WTC11 (cell line): ENCODE measurements at regions of chr4 and their contacts with region 1.

Region 1: GRCh38 chr4:47836641-47837093 is 1.2 kb downstream of the CORIN start:
- DNase-seq: peak; percentile 88
- ATAC-seq: peak; percentile 87
- H3K4me3 Mint-ChIP-seq: peak overlapping the region; percentile 84
- H3K27ac Mint-ChIP-seq: 0 out of 2 replicates have a peak overlapping the region, but pooled peaks have one; percentile 27
- H3K4me1 Mint-ChIP-seq: peaks cover 28% of the 10 kb centered on the region
- H3K27me3 Mint-ChIP-seq: peaks cover 10% of the 10 kb centered on the region; the same call in 1 of the 2 replicates
- CTCF ChIP-seq: peak; percentile 50

Region 2: GRCh38 chr4:47674144-47674543 is 162.5 kb before region 1 on chr4:
- CTCF ChIA-PET with region 1: interaction called, 25 read pairs
- POLR2A ChIA-PET with region 1: no interaction called
- DNase-seq: no peak
- ATAC-seq: no peak
- H3K4me3 Mint-ChIP-seq: no peak overlapping the region
- H3K27ac Mint-ChIP-seq: no peak overlapping the region
- H3K4me1 Mint-ChIP-seq: no peaks in the 10 kb centered on the region
- H3K27me3 Mint-ChIP-seq: no peaks in the 10 kb centered on the region
- CTCF ChIP-seq: no peak

Region 3: GRCh38 chr4:47704693-47705325 is 131.9 kb before region 1 on chr4:
- CTCF ChIA-PET with region 1: interaction called, 470 read pairs
- POLR2A ChIA-PET with region 1: interaction called, 7 read pairs
- DNase-seq: peak; percentile 60
- ATAC-seq: peak; percentile 97
- H3K4me3 Mint-ChIP-seq: no peak overlapping the region
- H3K27ac Mint-ChIP-seq: no peak overlapping the region
- H3K4me1 Mint-ChIP-seq: peaks cover 19% of the 10 kb centered on the region
- H3K27me3 Mint-ChIP-seq: no peaks in the 10 kb centered on the region
- CTCF ChIP-seq: no peak

Region 4: GRCh38 chr4:47721892-47722575 is 114.6 kb before region 1 on chr4:
- CTCF ChIA-PET with region 1: interaction called, 34 read pairs
- POLR2A ChIA-PET with region 1: interaction called, 3 read pairs
- DNase-seq: no peak
- ATAC-seq: no peak
- H3K4me3 Mint-ChIP-seq: no peak overlapping the region
- H3K27ac Mint-ChIP-seq: no peak overlapping the region
- H3K4me1 Mint-ChIP-seq: peaks cover 22% of the 10 kb centered on the region
- H3K27me3 Mint-ChIP-seq: peaks cover 2% of the 10 kb centered on the region; the same call in 1 of the 2 replicates
- CTCF ChIP-seq: no peak

Region 5: GRCh38 chr4:47774079-47774478 is 62.6 kb before region 1 on chr4:
- CTCF ChIA-PET with region 1: interaction called, 12 read pairs
- POLR2A ChIA-PET with region 1: no interaction called
- DNase-seq: peak; percentile 45
- ATAC-seq: peak; percentile 86
- H3K4me3 Mint-ChIP-seq: no peak overlapping the region
- H3K27ac Mint-ChIP-seq: no peak overlapping the region
- H3K4me1 Mint-ChIP-seq: peaks cover 5% of the 10 kb centered on the region
- H3K27me3 Mint-ChIP-seq: no peaks in the 10 kb centered on the region; the same call in 1 of the 2 replicates
- CTCF ChIP-seq: no peak

Region 6: DNA sequence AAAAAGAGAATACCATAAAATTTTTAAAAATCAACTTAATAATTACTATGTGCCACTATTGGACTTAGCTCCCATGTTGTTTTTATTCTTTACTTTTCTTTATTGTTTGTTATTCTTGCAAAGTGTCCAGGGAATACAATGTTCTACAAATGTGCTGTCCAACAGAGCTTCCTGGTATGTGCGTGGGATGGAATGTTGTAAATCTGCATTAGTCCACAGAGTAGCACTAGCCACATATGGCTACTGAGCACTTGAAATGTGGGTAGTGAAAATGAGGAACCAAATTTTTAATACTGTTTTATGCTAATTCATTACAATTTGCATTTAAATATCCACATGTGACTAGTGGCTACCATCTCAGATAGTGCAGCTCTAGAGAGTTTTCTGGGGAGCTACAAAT is 15.5 kb after region 1 on chr4:
- CTCF ChIA-PET with region 1: interaction called, 12 read pairs
- POLR2A ChIA-PET with region 1: no interaction called
- DNase-seq: no peak
- ATAC-seq: no peak
- H3K4me3 Mint-ChIP-seq: no peak overlapping the region
- H3K27ac Mint-ChIP-seq: no peak overlapping the region
- H3K4me1 Mint-ChIP-seq: no peaks in the 10 kb centered on the region
- H3K27me3 Mint-ChIP-seq: no peaks in the 10 kb centered on the region
- CTCF ChIP-seq: no peak

Region 7: DNA sequence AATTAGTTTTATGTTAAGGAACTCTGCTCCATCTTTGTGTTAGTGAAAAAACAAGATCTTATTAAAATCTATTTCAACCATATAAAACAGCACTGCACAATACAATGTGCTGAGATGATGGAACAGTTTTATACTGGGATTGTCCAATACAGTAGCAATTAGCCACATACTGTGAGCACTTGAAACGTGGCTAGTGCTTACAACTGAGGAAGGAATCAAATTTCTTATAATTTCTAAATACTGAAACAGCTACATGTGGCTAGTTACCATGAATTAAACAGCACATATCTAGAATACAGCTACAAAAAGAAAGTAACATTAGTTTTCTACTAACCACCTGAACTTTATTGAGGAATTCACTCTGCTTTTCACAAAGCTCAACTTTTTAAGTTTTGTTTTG is 63.0 kb after region 1 on chr4:
- CTCF ChIA-PET with region 1: no interaction called
- POLR2A ChIA-PET with region 1: no interaction called
- DNase-seq: no peak
- ATAC-seq: no peak
- H3K4me3 Mint-ChIP-seq: no peak overlapping the region
- H3K27ac Mint-ChIP-seq: no peak overlapping the region
- H3K4me1 Mint-ChIP-seq: no peaks in the 10 kb centered on the region
- H3K27me3 Mint-ChIP-seq: no peaks in the 10 kb centered on the region
- CTCF ChIP-seq: no peak

Region 8: GRCh38 chr4:47933840-47934239 is 97.2 kb after region 1 on chr4:
- CTCF ChIA-PET with region 1: interaction called, 28 read pairs
- POLR2A ChIA-PET with region 1: no interaction called
- DNase-seq: no peak
- ATAC-seq: no peak
- H3K4me3 Mint-ChIP-seq: no peak overlapping the region
- H3K27ac Mint-ChIP-seq: no peak overlapping the region
- H3K4me1 Mint-ChIP-seq: no peaks in the 10 kb centered on the region
- H3K27me3 Mint-ChIP-seq: no peaks in the 10 kb centered on the region; the same call in 1 of the 2 replicates
- CTCF ChIP-seq: peak; percentile 44; the same call in 1 of the 2 replicates